ENCODE measurements at regions of chr1 and their contacts with region 1.

Region 1: DNA sequence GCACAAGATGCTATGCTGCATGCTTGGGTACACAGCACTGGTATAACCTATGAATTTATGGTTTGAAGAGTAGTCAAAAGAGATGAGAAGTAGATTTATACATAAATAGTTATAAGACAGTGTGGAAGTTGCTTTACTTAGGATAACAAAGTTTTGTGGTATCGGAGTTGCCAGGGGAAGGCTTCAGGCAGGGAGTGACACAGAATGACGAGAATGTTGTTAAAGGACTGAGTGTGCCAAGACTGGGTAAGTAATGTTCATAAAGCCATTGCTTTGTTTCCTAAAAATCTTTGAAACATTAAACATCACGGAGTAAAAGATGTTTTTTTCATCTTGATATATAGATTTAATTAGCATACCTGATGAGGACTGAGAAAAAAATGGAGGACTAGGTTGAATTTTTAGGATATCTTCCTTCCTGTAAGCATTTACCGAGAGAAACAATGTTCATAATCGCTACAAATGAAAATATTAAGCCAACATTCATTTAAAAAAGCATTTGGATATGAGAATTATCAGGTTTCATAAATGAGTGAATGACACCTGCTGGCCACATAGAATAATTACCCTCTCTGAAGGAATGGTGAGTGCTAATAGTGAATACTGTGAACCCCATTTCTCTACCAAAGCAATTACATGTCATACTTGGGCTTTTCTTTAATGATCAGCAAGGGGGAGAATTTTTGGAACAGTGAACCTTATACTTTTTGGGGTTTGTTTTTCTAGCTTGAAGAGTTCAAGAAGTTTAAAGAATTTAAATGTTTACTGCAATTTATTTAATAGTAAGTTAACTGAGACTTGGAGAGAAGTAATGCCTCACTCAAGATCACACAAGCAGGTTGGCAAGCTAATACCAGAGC is 28.4 kb downstream of the EXTL2 start:
- DNase-seq: no peak
- H3K4me3 ChIP-seq: no peak overlapping the region
- H3K27ac ChIP-seq: no peak overlapping the region
- H3K4me1 ChIP-seq: no peaks in the 10 kb centered on the region
- H3K27me3 ChIP-seq: peaks cover 0 to 1% (median 0%) of the 10 kb centered on the region in 4 experiments; a peak in 1 of 7 replicates
- CTCF ChIP-seq: peak in 2 of 3 experiments; percentile 17 to 38; a peak in 2 of 4 replicates
- EP300 ChIP-seq: no peak
- POLR2A ChIP-seq: no peak
- RAD21 ChIP-seq: peak; percentile 49 to 53

Region 2: DNA sequence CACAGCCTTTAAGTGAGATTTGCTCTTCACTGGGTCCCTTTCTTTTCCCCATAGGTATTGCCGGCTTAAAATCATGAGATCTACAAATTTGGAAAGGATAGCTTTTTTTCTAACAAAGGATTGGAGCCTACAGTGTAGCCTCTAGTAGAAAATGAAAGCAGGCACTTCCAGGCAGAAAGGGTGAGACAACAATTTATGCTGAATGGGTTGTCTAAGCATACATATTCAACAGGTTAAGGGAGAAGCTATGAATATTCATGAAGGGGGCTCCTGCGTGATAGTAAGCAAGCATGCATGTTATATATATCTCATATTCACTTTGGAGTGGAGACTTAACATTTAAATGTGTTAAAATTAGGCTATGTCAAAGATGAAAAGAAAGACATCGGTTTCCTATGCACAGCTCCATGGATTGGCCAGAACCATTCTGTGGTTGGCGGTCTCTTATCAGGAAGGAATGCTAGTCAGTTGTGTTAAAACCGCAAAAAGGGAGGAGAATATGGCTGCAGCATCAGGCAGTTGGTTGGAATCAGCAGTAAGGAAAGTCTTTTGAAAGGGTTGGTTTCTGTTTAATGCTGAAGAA is 80.7 kb before region 1 on chr1:
- CTCF ChIA-PET with region 1: no interaction called
- POLR2A ChIA-PET with region 1: no interaction called
- DNase-seq: no peak
- H3K4me3 ChIP-seq: no peak overlapping the region
- H3K27ac ChIP-seq: no peak overlapping the region
- H3K4me1 ChIP-seq: no peaks in the 10 kb centered on the region
- H3K27me3 ChIP-seq: no peaks in the 10 kb centered on the region
- CTCF ChIP-seq: no peak
- EP300 ChIP-seq: no peak
- POLR2A ChIP-seq: no peak
- RAD21 ChIP-seq: no peak

Region 3: DNA sequence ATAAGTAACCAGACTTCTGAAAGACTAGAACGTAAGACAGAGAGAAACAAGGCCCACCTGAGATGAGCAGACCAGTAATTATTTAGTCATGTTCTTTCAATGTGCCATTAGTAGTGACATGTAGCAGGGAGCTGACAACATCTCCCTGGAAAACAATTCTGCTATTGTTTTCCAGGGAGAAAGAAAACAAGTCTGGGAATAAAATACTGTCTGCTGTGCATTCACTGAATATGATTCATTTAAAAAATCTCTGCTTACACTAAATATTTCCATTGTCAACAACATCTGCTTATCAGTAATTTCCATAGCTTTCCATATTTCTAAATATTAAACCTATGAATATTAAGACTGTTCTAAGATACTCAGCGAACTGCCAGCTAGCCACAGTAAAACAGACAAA is 66.7 kb before region 1 on chr1:
- CTCF ChIA-PET with region 1: no interaction called
- POLR2A ChIA-PET with region 1: no interaction called
- DNase-seq: no peak
- H3K4me3 ChIP-seq: no peak overlapping the region
- H3K27ac ChIP-seq: no peak overlapping the region
- H3K4me1 ChIP-seq: peaks cover 0 to 2% (median 0%) of the 10 kb centered on the region in 4 experiments; a peak in 1 of 7 replicates
- H3K27me3 ChIP-seq: no peaks in the 10 kb centered on the region
- CTCF ChIP-seq: no peak
- EP300 ChIP-seq: no peak
- POLR2A ChIP-seq: no peak
- RAD21 ChIP-seq: no peak

Region 4: GRCh38 chr1:100879422-100879821 is 13.2 kb after region 1 on chr1:
- CTCF ChIA-PET with region 1: interaction called, 10 read pairs
- POLR2A ChIA-PET with region 1: no interaction called
- DNase-seq: no peak
- H3K4me3 ChIP-seq: no peak overlapping the region
- H3K27ac ChIP-seq: no peak overlapping the region
- H3K4me1 ChIP-seq: no peaks in the 10 kb centered on the region
- H3K27me3 ChIP-seq: no peaks in the 10 kb centered on the region
- CTCF ChIP-seq: no peak
- EP300 ChIP-seq: no peak
- POLR2A ChIP-seq: no peak
- RAD21 ChIP-seq: no peak

Region 5: GRCh38 chr1:100921109-100921706 is 54.9 kb after region 1 on chr1:
- CTCF ChIA-PET with region 1: no interaction called
- POLR2A ChIA-PET with region 1: no interaction called
- DNase-seq: no peak
- H3K4me3 ChIP-seq: no peak overlapping the region
- H3K27ac ChIP-seq: no peak overlapping the region
- H3K4me1 ChIP-seq: no peaks in the 10 kb centered on the region
- H3K27me3 ChIP-seq: no peaks in the 10 kb centered on the region
- CTCF ChIP-seq: peak in 2 of 3 experiments; percentile 16 to 48; a peak in 2 of 4 replicates
- EP300 ChIP-seq: no peak
- POLR2A ChIP-seq: no peak
- RAD21 ChIP-seq: peak; percentile 58 to 65